Colonic mucosa (tissue), 4 donors: ENCODE measurements at regions of chr11 and their contacts with region 1.

Region 1: GRCh38 chr11:59097113-59097708 is 9.8 kb upstream of the FAM111B start:
- DNase-seq: peak; percentile 77
- H3K4me3 ChIP-seq: no peak overlapping the region
- H3K27ac ChIP-seq: no peak overlapping the region
- H3K4me1 ChIP-seq: no peaks in the 10 kb centered on the region
- H3K27me3 ChIP-seq: no peaks in the 10 kb centered on the region
- CTCF ChIP-seq: peak; percentile 55

Region 2: DNA sequence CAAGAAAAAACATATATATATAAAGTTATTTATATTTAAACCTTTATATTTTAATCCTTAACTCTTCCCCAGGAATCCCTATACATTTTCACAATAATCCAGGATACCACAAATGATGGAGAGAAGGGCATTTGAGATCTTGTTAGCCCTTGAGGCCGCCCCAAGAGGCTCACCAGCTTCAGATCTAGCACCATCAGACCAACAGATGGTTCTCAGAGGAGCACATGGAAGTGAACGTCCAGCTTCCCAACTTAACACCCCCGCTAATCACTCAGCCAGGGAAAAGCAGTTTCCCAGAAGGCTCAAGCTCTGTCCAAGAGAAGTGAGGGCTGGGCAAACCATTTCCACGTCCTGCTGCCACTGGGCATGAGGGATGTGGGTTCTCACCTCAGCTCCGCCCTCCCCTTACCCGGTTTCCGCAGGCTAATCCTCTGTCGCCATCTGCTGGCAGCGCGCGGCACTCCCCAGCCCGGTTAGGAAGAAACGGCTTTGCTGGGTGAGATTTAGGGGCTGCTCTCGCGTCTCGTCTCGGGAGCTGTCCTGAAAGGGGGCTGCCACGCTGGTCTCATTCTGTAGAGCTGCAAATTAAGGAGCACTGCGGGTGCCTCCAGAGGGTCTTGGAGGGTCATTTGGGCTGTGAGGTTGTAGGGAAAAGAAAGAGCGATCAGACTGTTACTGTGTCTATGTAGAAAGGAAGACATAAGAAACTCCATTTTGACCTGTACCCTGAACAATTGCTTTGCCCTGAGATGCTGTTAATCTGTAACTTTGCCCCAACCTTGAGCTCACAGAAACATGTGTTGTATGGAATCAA is 38.6 kb after region 1 on chr11:
- intact Hi-C with region 1: loop called (anchors 2 kb)
- DNase-seq: peak; percentile 87
- H3K4me3 ChIP-seq: no peak overlapping the region
- H3K27ac ChIP-seq: no peak overlapping the region
- H3K4me1 ChIP-seq: no peaks in the 10 kb centered on the region
- H3K27me3 ChIP-seq: no peaks in the 10 kb centered on the region
- CTCF ChIP-seq: peak; percentile 95

Region 3: GRCh38 chr11:59186130-59186594 is 89.0 kb after region 1 on chr11:
- intact Hi-C with region 1: no loop called
- DNase-seq: peak; percentile 94
- H3K4me3 ChIP-seq: no peak overlapping the region
- H3K27ac ChIP-seq: peak overlapping the region; percentile 73
- H3K4me1 ChIP-seq: peaks cover 39% of the 10 kb centered on the region
- H3K27me3 ChIP-seq: no peaks in the 10 kb centered on the region
- CTCF ChIP-seq: peak; percentile 78